AG04450 (cell line): ENCODE measurements at regions of chr19 and their contacts with region 1.

Region 1: DNA sequence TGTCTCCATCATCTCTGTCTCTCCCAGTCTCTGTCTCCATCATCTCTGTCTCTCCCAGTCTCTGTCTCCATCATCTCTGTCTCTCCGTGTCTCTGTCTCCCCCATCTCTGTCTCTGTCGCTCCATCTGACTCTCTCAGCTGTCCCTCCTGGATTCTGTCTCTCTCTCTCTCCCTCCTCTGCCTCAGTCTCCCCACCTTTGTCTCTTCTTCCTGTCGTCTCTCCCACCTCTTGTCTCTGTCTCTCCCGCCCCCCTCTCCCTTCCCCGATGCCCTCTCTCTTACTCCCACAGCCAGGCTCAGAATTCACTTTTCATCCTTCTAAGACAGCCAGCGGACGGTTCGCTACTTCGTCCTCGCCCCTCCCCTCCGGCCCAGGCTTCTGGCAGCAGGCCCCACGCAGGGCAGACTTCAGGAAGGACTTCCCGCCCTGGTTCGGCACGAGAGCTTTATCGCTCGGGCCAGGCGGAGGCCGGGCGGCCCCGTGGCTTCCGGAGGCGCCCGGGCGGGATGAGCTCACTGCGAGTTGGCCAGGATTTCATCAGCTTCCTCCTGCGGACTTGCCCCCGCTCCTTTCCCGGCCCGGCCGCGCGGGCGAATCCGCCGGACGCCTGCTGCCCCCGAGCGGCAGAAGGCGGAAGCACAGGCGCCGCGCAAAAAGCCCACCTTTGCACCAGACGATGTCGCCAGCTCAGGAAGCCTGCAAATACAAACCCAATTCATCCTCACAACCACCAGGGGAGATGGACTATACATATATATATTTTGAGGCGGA is 12.4 kb upstream of the CCDC9 start:
- DNase-seq: peak; percentile 94
- H3K4me3 ChIP-seq: peak overlapping the region; percentile 63
- H3K27ac ChIP-seq: peak overlapping the region; percentile 95
- H3K27me3 ChIP-seq: no peaks in the 10 kb centered on the region
- CTCF ChIP-seq: peak; percentile 92

Region 2: GRCh38 chr19:47013041-47013517 is 230.9 kb before region 1 on chr19:
- CTCF ChIA-PET with region 1: interaction called, 12 read pairs
- POLR2A ChIA-PET with region 1: no interaction called
- DNase-seq: peak; percentile 23
- H3K4me3 ChIP-seq: no peak overlapping the region
- H3K27ac ChIP-seq: peak overlapping the region; percentile 31
- H3K27me3 ChIP-seq: no peaks in the 10 kb centered on the region
- CTCF ChIP-seq: peak; percentile 97

Region 3: DNA sequence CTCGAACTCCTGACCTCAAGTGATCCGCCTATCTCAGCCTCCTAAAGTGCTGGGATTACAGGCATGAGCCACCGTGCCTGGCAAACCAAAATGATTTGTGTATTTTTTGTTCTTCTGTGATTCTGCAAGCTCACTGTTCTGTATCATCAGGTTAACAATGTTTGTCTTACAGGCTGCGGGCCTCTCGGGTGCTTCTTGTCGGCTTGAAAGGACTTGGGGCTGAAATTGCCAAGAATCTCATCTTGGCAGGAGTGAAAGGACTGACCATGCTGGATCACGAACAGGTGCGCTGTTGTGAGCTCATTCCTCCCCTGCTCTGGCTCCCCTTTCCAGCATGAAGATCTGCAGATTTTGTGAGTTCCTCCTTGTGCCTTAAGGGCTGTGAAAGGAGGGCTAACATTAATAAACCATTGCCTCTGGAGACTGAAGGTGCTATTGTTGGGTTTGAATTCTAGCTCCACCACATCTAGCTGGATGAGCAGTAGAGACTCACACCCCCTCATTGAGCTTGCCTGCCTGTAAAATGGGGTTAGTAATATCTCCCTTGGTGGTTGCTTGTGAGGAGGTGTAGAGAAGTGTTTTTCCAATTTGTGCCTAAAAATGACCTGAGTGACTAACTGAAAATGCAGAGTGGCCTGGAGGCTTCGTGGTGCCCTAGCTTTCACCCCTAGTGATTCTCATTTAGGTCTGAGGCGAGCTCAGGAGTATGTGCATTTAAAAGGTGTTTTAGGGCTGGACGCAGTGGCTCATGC is 100.5 kb before region 1 on chr19:
- CTCF ChIA-PET with region 1: interaction called, 351 read pairs
- POLR2A ChIA-PET with region 1: interaction called, 3 read pairs
- DNase-seq: no peak
- H3K4me3 ChIP-seq: no peak overlapping the region
- H3K27ac ChIP-seq: no peak overlapping the region
- H3K27me3 ChIP-seq: no peaks in the 10 kb centered on the region
- CTCF ChIP-seq: no peak

Region 4: GRCh38 chr19:47168065-47168464 is 75.9 kb before region 1 on chr19:
- CTCF ChIA-PET with region 1: interaction called, 13 read pairs
- POLR2A ChIA-PET with region 1: no interaction called
- DNase-seq: no peak
- H3K4me3 ChIP-seq: no peak overlapping the region
- H3K27ac ChIP-seq: no peak overlapping the region
- H3K27me3 ChIP-seq: no peaks in the 10 kb centered on the region
- CTCF ChIP-seq: no peak

Region 5: GRCh38 chr19:47210689-47211316 is 33.2 kb before region 1 on chr19:
- CTCF ChIA-PET with region 1: interaction called, 295 read pairs
- POLR2A ChIA-PET with region 1: interaction called, 23 read pairs
- DNase-seq: peak; percentile 59
- H3K4me3 ChIP-seq: no peak overlapping the region
- H3K27ac ChIP-seq: peak overlapping the region; percentile 95
- H3K27me3 ChIP-seq: no peaks in the 10 kb centered on the region
- CTCF ChIP-seq: peak; percentile 84

Region 6: DNA sequence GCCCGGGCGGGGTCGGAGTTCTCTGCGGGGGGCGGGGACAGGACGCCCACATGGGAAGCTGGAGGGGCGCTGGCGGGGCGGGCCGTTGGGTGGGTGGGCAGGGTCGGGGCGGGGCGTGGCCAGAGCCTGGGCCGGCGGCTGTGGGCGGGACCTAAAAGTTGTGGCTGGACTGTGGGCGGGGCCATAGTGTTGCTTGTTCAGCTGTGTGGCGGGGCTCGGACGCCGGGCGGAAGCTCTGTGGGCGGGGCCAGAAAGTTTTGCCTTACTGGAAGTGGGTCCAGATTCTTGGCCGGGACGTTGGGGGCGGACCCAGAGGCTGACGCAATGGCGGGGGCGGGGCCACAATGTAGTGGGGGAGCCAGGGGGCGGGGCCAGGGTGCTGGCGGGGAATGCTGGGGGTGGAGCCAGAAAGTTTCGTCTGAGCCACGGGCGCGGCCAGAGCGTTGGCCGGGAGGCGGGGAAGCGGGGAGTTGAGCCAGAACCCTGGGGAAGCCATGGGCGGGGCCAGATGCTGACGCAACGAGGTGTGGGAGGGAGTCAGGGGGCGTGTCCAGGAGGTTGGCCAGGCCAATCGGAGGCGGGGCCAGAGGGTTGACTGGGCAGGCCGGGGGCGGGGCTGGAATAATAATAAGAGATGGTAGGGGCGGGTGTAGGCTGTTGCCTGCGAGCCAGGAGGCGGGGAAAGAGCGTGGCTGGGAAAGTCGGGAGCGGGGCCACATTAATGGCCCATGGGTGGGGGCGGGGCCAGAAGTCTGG is 12.9 kb after region 1 on chr19:
- CTCF ChIA-PET with region 1: interaction called, 26 read pairs
- POLR2A ChIA-PET with region 1: interaction called, 19 read pairs
- DNase-seq: peak; percentile 99
- H3K4me3 ChIP-seq: peak overlapping the region; percentile 75
- H3K27ac ChIP-seq: peak overlapping the region; percentile 96
- H3K27me3 ChIP-seq: no peaks in the 10 kb centered on the region
- CTCF ChIP-seq: no peak